Naive thymus-derived CD4-positive, alpha-beta T cell (primary cell): ENCODE measurements at regions of chr11 and their contacts with region 1.

Region 1: DNA sequence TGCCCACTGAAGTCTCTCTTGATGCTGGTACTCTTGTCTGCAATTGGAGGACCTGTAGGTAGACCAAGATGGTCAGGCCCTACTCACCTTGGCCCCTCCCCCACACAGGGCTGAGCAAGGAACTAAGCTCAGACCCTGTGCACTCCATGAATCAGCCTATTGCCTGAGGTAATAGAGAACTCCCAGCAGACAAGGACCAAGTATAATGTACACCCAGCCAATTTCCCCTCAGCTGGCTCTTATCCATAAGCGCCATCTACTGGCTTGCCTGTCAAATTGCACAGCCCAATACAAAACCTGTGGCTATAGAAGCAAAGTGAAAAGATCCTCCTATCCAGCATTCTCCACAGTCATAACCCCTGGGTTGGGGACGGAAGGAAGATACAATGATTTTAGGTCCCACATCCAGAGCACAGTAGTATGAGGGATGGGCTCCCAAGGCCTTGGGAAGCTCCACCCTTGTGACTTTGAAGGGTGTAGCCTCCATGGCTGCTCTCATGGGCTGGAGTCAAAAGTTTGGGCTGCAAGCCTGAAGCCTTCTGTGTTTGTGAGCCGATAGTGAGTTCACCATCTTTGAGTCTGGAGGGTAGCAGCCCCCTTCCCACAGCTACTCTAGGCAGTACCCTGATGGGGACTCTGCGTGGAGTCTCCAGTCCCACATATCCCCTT is 56.0 kb downstream of the GLYATL2 start:
- DNase-seq: peak in 8 of 9 donors; percentile 27 to 79 (median 74)
- ATAC-seq: peak; percentile 93
- H3K4me3 ChIP-seq: no peak overlapping the region
- H3K4me3 Mint-ChIP-seq: no peak overlapping the region
- H3K27ac ChIP-seq: no peak overlapping the region
- H3K27ac Mint-ChIP-seq: peak overlapping the region in 1 of 9 donors; percentile 77
- H3K4me1 ChIP-seq: no peaks in the 10 kb centered on the region
- H3K4me1 Mint-ChIP-seq: peaks cover 0 to 4% (median 0%) of the 10 kb centered on the region in 7 donors
- H3K27me3 ChIP-seq: no peaks in the 10 kb centered on the region
- H3K27me3 Mint-ChIP-seq: peaks cover 1 to 21% (median 6%) of the 10 kb centered on the region in 5 donors

Region 2: DNA sequence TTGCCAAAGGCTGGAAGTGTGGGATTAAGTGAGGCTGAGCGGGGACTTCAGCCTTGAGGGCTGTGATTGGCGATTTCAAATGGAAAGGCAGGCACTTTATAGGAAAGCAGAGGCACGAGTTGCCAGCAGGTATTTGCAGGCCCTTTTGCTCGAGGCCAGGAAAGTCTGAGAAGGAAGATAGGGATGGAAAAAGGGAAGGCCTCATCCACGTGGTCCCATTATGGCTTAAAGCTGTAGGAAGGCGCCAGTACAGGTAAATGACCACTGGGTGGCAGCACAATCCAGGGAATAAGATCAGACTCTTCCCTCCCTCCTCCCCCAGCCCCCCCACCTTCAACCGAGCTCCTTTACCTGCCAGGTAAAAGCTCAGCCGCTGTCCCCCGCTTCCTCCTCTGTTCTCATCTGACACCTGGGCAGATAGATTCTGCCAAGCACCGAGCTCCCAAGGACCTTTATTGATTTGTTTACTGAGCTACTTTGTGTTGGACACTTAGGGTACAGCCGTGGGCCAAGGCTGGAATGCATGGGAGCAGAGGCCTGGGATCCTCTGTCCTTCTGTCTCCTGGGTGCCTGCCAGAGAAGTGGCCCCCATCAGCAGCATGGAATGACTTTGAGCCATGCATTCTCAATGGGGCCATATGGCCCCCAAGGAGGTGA is 1442.8 kb before region 1 on chr11:
- CTCF ChIA-PET with region 1: no interaction called
- POLR2A ChIA-PET with region 1: no interaction called
- intact Hi-C with region 1: loop called in 1 of 2 experiments (anchors 5 kb)
- DNase-seq: peak; percentile 39 to 68 (median 62)
- ATAC-seq: peak; percentile 87
- H3K4me3 ChIP-seq: no peak overlapping the region
- H3K4me3 Mint-ChIP-seq: no peak overlapping the region
- H3K27ac ChIP-seq: no peak overlapping the region
- H3K27ac Mint-ChIP-seq: no peak overlapping the region
- H3K4me1 ChIP-seq: no peaks in the 10 kb centered on the region
- H3K4me1 Mint-ChIP-seq: peaks cover 0 to 10% (median 0%) of the 10 kb centered on the region in 7 donors
- H3K27me3 ChIP-seq: no peaks in the 10 kb centered on the region
- H3K27me3 Mint-ChIP-seq: no peaks in the 10 kb centered on the region

Region 3: DNA sequence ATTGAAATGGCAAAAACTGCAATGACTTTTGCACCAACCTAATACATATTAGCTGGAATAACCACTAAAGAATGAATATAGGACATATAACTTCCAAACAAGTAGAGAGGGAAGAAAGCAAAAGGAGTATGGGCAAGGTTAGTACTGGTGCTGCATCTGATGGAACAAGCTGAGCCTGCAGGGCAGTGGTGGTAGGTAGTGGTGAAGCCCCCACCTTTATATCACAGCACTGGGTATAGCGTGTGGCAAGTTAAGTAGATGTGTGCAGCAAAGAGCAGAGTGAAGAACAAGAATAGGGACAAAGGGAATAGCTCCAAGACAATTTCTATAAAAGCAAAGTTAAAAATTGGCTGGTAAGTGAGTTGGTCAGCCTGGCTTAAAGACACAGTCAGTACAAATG is 964.6 kb before region 1 on chr11:
- CTCF ChIA-PET with region 1: no interaction called
- POLR2A ChIA-PET with region 1: no interaction called
- intact Hi-C with region 1: no loop called
- DNase-seq: no peak
- ATAC-seq: no peak
- H3K4me3 ChIP-seq: no peak overlapping the region
- H3K4me3 Mint-ChIP-seq: no peak overlapping the region
- H3K27ac ChIP-seq: no peak overlapping the region
- H3K27ac Mint-ChIP-seq: no peak overlapping the region
- H3K4me1 ChIP-seq: no peaks in the 10 kb centered on the region
- H3K4me1 Mint-ChIP-seq: no peaks in the 10 kb centered on the region
- H3K27me3 ChIP-seq: no peaks in the 10 kb centered on the region
- H3K27me3 Mint-ChIP-seq: peaks cover 0 to 10% (median 0%) of the 10 kb centered on the region in 5 donors

Region 4: GRCh38 chr11:57978686-57979531 is 809.6 kb before region 1 on chr11:
- CTCF ChIA-PET with region 1: no interaction called
- POLR2A ChIA-PET with region 1: no interaction called
- intact Hi-C with region 1: no loop called
- DNase-seq: no peak
- ATAC-seq: no peak
- H3K4me3 ChIP-seq: no peak overlapping the region
- H3K4me3 Mint-ChIP-seq: no peak overlapping the region
- H3K27ac ChIP-seq: no peak overlapping the region
- H3K27ac Mint-ChIP-seq: no peak overlapping the region
- H3K4me1 ChIP-seq: no peaks in the 10 kb centered on the region
- H3K4me1 Mint-ChIP-seq: no peaks in the 10 kb centered on the region
- H3K27me3 ChIP-seq: no peaks in the 10 kb centered on the region
- H3K27me3 Mint-ChIP-seq: peaks cover 3 to 23% (median 12%) of the 10 kb centered on the region in 5 donors

Region 5: GRCh38 chr11:58675334-58676155 is 112.9 kb before region 1 on chr11:
- CTCF ChIA-PET with region 1: interaction called, 9 read pairs
- POLR2A ChIA-PET with region 1: interaction called, 3 read pairs
- intact Hi-C with region 1: loop called in 1 of 2 experiments (anchors 1 kb)
- DNase-seq: peak; percentile 37 to 75 (median 65)
- ATAC-seq: peak; percentile 83
- H3K4me3 ChIP-seq: no peak overlapping the region
- H3K4me3 Mint-ChIP-seq: no peak overlapping the region
- H3K27ac ChIP-seq: no peak overlapping the region
- H3K27ac Mint-ChIP-seq: no peak overlapping the region
- H3K4me1 ChIP-seq: no peaks in the 10 kb centered on the region
- H3K4me1 Mint-ChIP-seq: no peaks in the 10 kb centered on the region
- H3K27me3 ChIP-seq: peaks cover 0 to 4% of the 10 kb centered on the region in 2 donors
- H3K27me3 Mint-ChIP-seq: peaks cover 0 to 5% (median 0%) of the 10 kb centered on the region in 5 donors

Region 6: GRCh38 chr11:58719406-58720117 is 68.9 kb before region 1 on chr11:
- CTCF ChIA-PET with region 1: interaction called, 4 read pairs
- POLR2A ChIA-PET with region 1: no interaction called
- intact Hi-C with region 1: loop called in 1 of 2 experiments (anchors 1 kb)
- DNase-seq: no peak
- ATAC-seq: no peak
- H3K4me3 ChIP-seq: no peak overlapping the region
- H3K4me3 Mint-ChIP-seq: no peak overlapping the region
- H3K27ac ChIP-seq: no peak overlapping the region
- H3K27ac Mint-ChIP-seq: no peak overlapping the region
- H3K4me1 ChIP-seq: no peaks in the 10 kb centered on the region
- H3K4me1 Mint-ChIP-seq: no peaks in the 10 kb centered on the region
- H3K27me3 ChIP-seq: no peaks in the 10 kb centered on the region
- H3K27me3 Mint-ChIP-seq: no peaks in the 10 kb centered on the region

Region 7: GRCh38 chr11:58726737-58727414 is 61.6 kb before region 1 on chr11:
- CTCF ChIA-PET with region 1: interaction called, 9 read pairs
- POLR2A ChIA-PET with region 1: interaction called, 4 read pairs
- intact Hi-C with region 1: loop called in 1 of 2 experiments (anchors 1 kb)
- DNase-seq: peak in 7 of 9 donors; percentile 39 to 79 (median 73)
- ATAC-seq: peak; percentile 84
- H3K4me3 ChIP-seq: no peak overlapping the region
- H3K4me3 Mint-ChIP-seq: peak overlapping the region; percentile 33 to 86 (median 62)
- H3K27ac ChIP-seq: peak overlapping the region; percentile 60
- H3K27ac Mint-ChIP-seq: peak overlapping the region; percentile 58 to 99 (median 97)
- H3K4me1 ChIP-seq: peaks cover 4 to 41% of the 10 kb centered on the region in 2 donors
- H3K4me1 Mint-ChIP-seq: peaks cover 16 to 67% (median 54%) of the 10 kb centered on the region in 7 donors
- H3K27me3 ChIP-seq: no peaks in the 10 kb centered on the region
- H3K27me3 Mint-ChIP-seq: no peaks in the 10 kb centered on the region

Region 8: GRCh38 chr11:58813693-58814092 is 25.2 kb after region 1 on chr11:
- CTCF ChIA-PET with region 1: no interaction called
- POLR2A ChIA-PET with region 1: no interaction called
- intact Hi-C with region 1: no loop called
- DNase-seq: no peak
- ATAC-seq: no peak
- H3K4me3 ChIP-seq: no peak overlapping the region
- H3K4me3 Mint-ChIP-seq: no peak overlapping the region
- H3K27ac ChIP-seq: no peak overlapping the region
- H3K27ac Mint-ChIP-seq: no peak overlapping the region
- H3K4me1 ChIP-seq: no peaks in the 10 kb centered on the region
- H3K4me1 Mint-ChIP-seq: no peaks in the 10 kb centered on the region
- H3K27me3 ChIP-seq: peaks cover 0 to 4% of the 10 kb centered on the region in 2 donors
- H3K27me3 Mint-ChIP-seq: peaks cover 0 to 40% (median 33%) of the 10 kb centered on the region in 5 donors

Region 9: GRCh38 chr11:59135648-59136461 is 347.4 kb after region 1 on chr11:
- CTCF ChIA-PET with region 1: interaction called, 4 read pairs
- POLR2A ChIA-PET with region 1: no interaction called
- intact Hi-C with region 1: loop called in 1 of 2 experiments (anchors 5 kb)
- DNase-seq: peak; percentile 72 to 92 (median 84)
- ATAC-seq: peak; percentile 100
- H3K4me3 ChIP-seq: no peak overlapping the region
- H3K4me3 Mint-ChIP-seq: peak overlapping the region in 9 of 10 donors; percentile 41 to 85 (median 66)
- H3K27ac ChIP-seq: no peak overlapping the region
- H3K27ac Mint-ChIP-seq: peak overlapping the region in 5 of 9 donors; percentile 0 to 87 (median 68)
- H3K4me1 ChIP-seq: peaks cover 4 to 5% of the 10 kb centered on the region in 2 donors
- H3K4me1 Mint-ChIP-seq: peaks cover 3 to 33% (median 10%) of the 10 kb centered on the region in 7 donors
- H3K27me3 ChIP-seq: no peaks in the 10 kb centered on the region
- H3K27me3 Mint-ChIP-seq: no peaks in the 10 kb centered on the region

Region 10: GRCh38 chr11:59158206-59159068 is 369.9 kb after region 1 on chr11:
- CTCF ChIA-PET with region 1: interaction called, 3 read pairs
- POLR2A ChIA-PET with region 1: no interaction called
- intact Hi-C with region 1: loop called (anchors 2 to 10 kb)
- DNase-seq: peak in 8 of 9 donors; percentile 53 to 75 (median 70)
- ATAC-seq: peak; percentile 97
- H3K4me3 ChIP-seq: no peak overlapping the region
- H3K4me3 Mint-ChIP-seq: peak overlapping the region in 1 of 10 donors; percentile 18
- H3K27ac ChIP-seq: no peak overlapping the region
- H3K27ac Mint-ChIP-seq: peak overlapping the region in 7 of 9 donors; percentile 8 to 65 (median 50)
- H3K4me1 ChIP-seq: no peaks in the 10 kb centered on the region
- H3K4me1 Mint-ChIP-seq: peaks cover 4 to 16% (median 5%) of the 10 kb centered on the region in 7 donors
- H3K27me3 ChIP-seq: no peaks in the 10 kb centered on the region
- H3K27me3 Mint-ChIP-seq: peaks cover 9 to 14% (median 9%) of the 10 kb centered on the region in 5 donors